PC-9 (cell line): ENCODE measurements at regions of chr11 and their contacts with region 1.

Region 1: GRCh38 chr11:62805076-62805892 is at the start of gene NXF1:
- DNase-seq: peak; percentile 87 to 98
- H3K4me3 ChIP-seq: peak within 1 kb of the TSS; percentile 94
- H3K27ac ChIP-seq: peak within 1 kb of the TSS; percentile 16
- H3K4me1 ChIP-seq: peaks cover 20% of the 10 kb centered on the region
- H3K27me3 ChIP-seq: no peaks in the 10 kb centered on the region
- CTCF ChIP-seq: no peak
- total RNA-seq, gene NXF1: 45.6 and 56.1 TPM in 2 replicates

Region 2: GRCh38 chr11:62340269-62340901 is 464.9 kb before region 1 on chr11:
- CTCF ChIA-PET with region 1: interaction called, 11 read pairs
- POLR2A ChIA-PET with region 1: no interaction called
- intact Hi-C with region 1: no loop called
- DNase-seq: peak in 1 of 2 experiments; percentile 18
- H3K4me3 ChIP-seq: no peak overlapping the region
- H3K27ac ChIP-seq: no peak overlapping the region
- H3K4me1 ChIP-seq: no peaks in the 10 kb centered on the region
- H3K27me3 ChIP-seq: peaks cover 31% of the 10 kb centered on the region
- CTCF ChIP-seq: peak; percentile 77

Region 3: GRCh38 chr11:62831520-62832335 is 26.4 kb after region 1 on chr11 and contains the start of gene STX5:
- CTCF ChIA-PET with region 1: no interaction called
- POLR2A ChIA-PET with region 1: interaction called, 4 read pairs
- intact Hi-C with region 1: loop called (anchors 1 kb)
- DNase-seq: peak; percentile 96 to 99
- H3K4me3 ChIP-seq: peak within 1 kb of the TSS; percentile 100
- H3K27ac ChIP-seq: peak within 1 kb of the TSS; percentile 77
- H3K4me1 ChIP-seq: peaks cover 22% of the 10 kb centered on the region
- H3K27me3 ChIP-seq: no peaks in the 10 kb centered on the region
- CTCF ChIP-seq: no peak
- total RNA-seq, gene STX5: 61.9 and 65.8 TPM in 2 replicates

Region 4: GRCh38 chr11:63023841-63024648 is 218.8 kb after region 1 on chr11:
- CTCF ChIA-PET with region 1: interaction called, 11 read pairs
- POLR2A ChIA-PET with region 1: no interaction called
- intact Hi-C with region 1: no loop called
- DNase-seq: peak; percentile 50 to 81
- H3K4me3 ChIP-seq: no peak overlapping the region
- H3K27ac ChIP-seq: no peak overlapping the region
- H3K4me1 ChIP-seq: no peaks in the 10 kb centered on the region
- H3K27me3 ChIP-seq: peaks cover 69% of the 10 kb centered on the region
- CTCF ChIP-seq: peak; percentile 100

Region 5: GRCh38 chr11:63621931-63622782 is 816.9 kb after region 1 on chr11:
- CTCF ChIA-PET with region 1: no interaction called
- POLR2A ChIA-PET with region 1: interaction called, 13 read pairs
- intact Hi-C with region 1: no loop called
- DNase-seq: peak; percentile 67 to 97
- H3K4me3 ChIP-seq: no peak overlapping the region
- H3K27ac ChIP-seq: no peak overlapping the region
- H3K4me1 ChIP-seq: peaks cover 22% of the 10 kb centered on the region
- H3K27me3 ChIP-seq: no peaks in the 10 kb centered on the region
- CTCF ChIP-seq: no peak